Mammary epithelial cell (primary cell): ENCODE measurements at regions of chr7 and their contacts with region 1.

Region 1: GRCh38 chr7:157851501-157852067 is 514.8 kb downstream of the DNAJB6 start:
- DNase-seq: no peak
- H3K4me3 ChIP-seq: no peak overlapping the region
- H3K27ac ChIP-seq: no peak overlapping the region
- H3K4me1 ChIP-seq: no peaks in the 10 kb centered on the region
- H3K27me3 ChIP-seq: no peaks in the 10 kb centered on the region
- CTCF ChIP-seq: no peak

Region 2: GRCh38 chr7:157751406-157751805 is 100.2 kb before region 1 on chr7:
- CTCF ChIA-PET with region 1: no interaction called
- dilution Hi-C with region 1: loop called (anchors 5 kb)
- in situ Hi-C with region 1: no loop called
- intact Hi-C with region 1: no loop called
- DNase-seq: no peak
- H3K4me3 ChIP-seq: no peak overlapping the region
- H3K27ac ChIP-seq: no peak overlapping the region
- H3K4me1 ChIP-seq: no peaks in the 10 kb centered on the region
- H3K27me3 ChIP-seq: no peaks in the 10 kb centered on the region
- CTCF ChIP-seq: no peak

Region 3: GRCh38 chr7:157793087-157793353 is 58.6 kb before region 1 on chr7:
- CTCF ChIA-PET with region 1: no interaction called
- dilution Hi-C with region 1: loop called (anchors 5 kb)
- in situ Hi-C with region 1: no loop called
- intact Hi-C with region 1: no loop called
- DNase-seq: no peak
- H3K4me3 ChIP-seq: no peak overlapping the region
- H3K27ac ChIP-seq: no peak overlapping the region
- H3K4me1 ChIP-seq: no peaks in the 10 kb centered on the region
- H3K27me3 ChIP-seq: no peaks in the 10 kb centered on the region
- CTCF ChIP-seq: no peak

Region 4: DNA sequence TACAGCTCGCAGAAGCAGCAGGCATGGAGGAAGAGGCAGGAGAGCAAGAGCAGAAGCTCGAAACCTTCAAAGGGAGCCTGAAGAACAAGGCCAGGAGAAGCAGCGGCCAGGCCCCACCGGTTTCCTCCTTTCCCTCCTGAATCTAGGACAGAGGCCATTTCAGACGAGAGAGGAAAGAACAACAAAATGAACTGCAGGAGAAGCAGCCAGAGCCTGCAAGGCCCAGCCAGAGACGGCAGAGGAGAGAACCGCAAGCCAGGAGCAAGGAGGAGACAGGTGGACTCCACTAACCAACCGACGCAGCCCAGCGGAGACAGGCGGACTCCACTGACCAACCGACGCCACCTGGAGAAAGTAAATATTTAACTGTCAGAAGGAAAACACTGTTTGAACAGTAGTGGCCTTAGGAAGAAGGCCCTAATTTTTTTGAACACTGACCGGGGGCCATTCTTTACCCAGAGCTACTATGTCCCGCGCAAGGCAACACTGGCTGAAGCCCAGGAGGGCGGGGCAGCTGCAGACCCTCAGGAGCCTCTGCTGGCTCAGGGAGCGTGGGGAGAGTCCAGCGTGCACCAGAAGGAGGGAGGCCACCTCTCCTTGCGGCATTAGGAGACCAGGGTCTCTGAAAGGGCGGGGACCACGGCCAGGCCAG is 176.8 kb after region 1 on chr7:
- CTCF ChIA-PET with region 1: no interaction called
- dilution Hi-C with region 1: no loop called
- in situ Hi-C with region 1: no loop called
- intact Hi-C with region 1: no loop called
- DNase-seq: no peak
- H3K4me3 ChIP-seq: no peak overlapping the region
- H3K27ac ChIP-seq: no peak overlapping the region
- H3K4me1 ChIP-seq: no peaks in the 10 kb centered on the region
- H3K27me3 ChIP-seq: no peaks in the 10 kb centered on the region
- CTCF ChIP-seq: no peak